Sciatic nerve (tissue), 2 donors: ENCODE measurements at regions of chr7 and their contacts with region 1.

Region 1: GRCh38 chr7:143240291-143241168 is 18.7 kb downstream of the TAS2R40 start:
- DNase-seq: peak; percentile 82
- ATAC-seq: peak; percentile 92

Region 2: GRCh38 chr7:143305423-143306070 is 65.0 kb after region 1 on chr7:
- intact Hi-C with region 1: loop called (anchors 10 kb)
- DNase-seq: peak; percentile 89
- ATAC-seq: peak; percentile 81

Region 3: GRCh38 chr7:143416565-143417149 is 176.1 kb after region 1 on chr7:
- intact Hi-C with region 1: loop called (anchors 10 kb)
- DNase-seq: no peak
- ATAC-seq: peak; percentile 61